CD4-positive, alpha-beta T cell (primary cell): ENCODE measurements at regions of chr14 and their contacts with region 1.

Region 1: DNA sequence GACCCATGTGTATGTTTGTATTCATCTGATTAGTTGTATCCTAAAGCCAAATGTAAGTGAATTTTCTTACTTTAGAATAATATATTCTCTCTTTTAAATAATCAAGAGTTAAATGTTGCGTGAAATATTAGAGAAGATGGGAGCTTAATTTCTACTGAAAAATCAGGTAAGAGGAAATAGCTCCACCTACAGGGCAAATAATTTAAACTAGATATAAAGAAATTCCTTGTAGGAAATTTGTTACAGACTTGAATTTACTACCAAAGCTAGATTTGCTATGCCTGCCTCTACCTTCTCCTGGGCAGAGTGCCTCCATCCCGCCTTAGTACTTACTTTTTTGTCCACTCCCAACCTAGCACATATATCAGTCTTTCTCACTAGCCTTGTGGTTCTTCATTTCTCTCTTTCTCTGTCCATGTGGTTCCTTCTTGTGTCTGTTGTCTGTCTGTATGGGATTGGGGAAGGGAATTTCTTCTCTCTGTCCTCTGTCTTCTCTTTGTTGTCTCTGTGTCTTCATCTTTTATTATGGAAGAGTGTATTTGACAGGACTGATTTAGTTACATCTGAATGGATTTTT is 44.7 kb downstream of the PALS1 start:
- DNase-seq: peak in 3 of 14 experiments; percentile 48 to 55 (median 51)
- ATAC-seq: no peak
- H3K4me3 ChIP-seq: no peak overlapping the region
- H3K4me3 Mint-ChIP-seq: no peak overlapping the region
- H3K27ac ChIP-seq: no peak overlapping the region
- H3K27ac Mint-ChIP-seq: no peak overlapping the region
- H3K4me1 ChIP-seq: no peaks in the 10 kb centered on the region
- H3K4me1 Mint-ChIP-seq: no peaks in the 10 kb centered on the region
- H3K27me3 ChIP-seq: no peaks in the 10 kb centered on the region
- H3K27me3 Mint-ChIP-seq: no peaks in the 10 kb centered on the region
- CTCF ChIP-seq: peak; percentile 81

Region 2: DNA sequence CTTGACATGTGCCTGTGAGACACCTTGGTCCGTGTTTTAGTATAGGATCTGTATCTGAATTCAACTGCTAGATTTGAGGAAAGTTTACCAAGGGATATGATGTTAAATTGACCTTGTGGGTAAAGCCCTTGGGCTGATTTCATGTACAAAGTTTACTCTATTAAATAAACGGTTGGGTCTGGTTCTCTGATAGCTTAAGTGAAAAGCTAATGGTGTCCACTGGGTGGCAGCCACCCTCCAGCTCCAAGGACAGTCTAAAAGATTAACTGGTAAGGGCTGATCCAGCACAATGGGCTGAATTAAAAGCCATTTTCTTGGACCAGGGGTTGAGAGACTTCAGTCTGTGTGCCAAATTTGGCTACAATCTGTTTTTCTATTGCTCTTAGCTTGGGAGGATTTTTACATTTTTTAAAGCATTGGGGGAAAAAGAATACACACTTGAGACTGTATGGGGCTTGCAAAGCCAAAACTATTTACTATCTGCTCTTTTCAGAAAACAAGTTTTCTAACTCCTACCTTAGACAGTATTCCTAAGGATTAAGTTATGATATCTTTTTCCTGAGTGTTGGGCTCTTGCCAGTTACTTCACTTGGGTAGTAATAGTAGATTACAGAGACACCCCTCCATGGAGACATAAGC is 661.5 kb before region 1 on chr14:
- CTCF ChIA-PET with region 1: no interaction called
- POLR2A ChIA-PET with region 1: no interaction called
- intact Hi-C with region 1: loop called (anchors 5 to 10 kb)
- DNase-seq: peak in 7 of 14 experiments; percentile 4 to 42 (median 26)
- ATAC-seq: no peak
- H3K4me3 ChIP-seq: no peak overlapping the region
- H3K4me3 Mint-ChIP-seq: no peak overlapping the region
- H3K27ac ChIP-seq: no peak overlapping the region
- H3K27ac Mint-ChIP-seq: no peak overlapping the region
- H3K4me1 ChIP-seq: no peaks in the 10 kb centered on the region
- H3K4me1 Mint-ChIP-seq: peaks cover 9% of the 10 kb centered on the region
- H3K27me3 ChIP-seq: no peaks in the 10 kb centered on the region
- H3K27me3 Mint-ChIP-seq: no peaks in the 10 kb centered on the region
- CTCF ChIP-seq: peak; percentile 41

Region 3: GRCh38 chr14:68552602-68553001 is 1266.6 kb after region 1 on chr14:
- CTCF ChIA-PET with region 1: no interaction called
- POLR2A ChIA-PET with region 1: no interaction called
- intact Hi-C with region 1: no loop called
- DNase-seq: peak in 1 of 14 experiments; percentile 5
- ATAC-seq: no peak
- H3K4me3 ChIP-seq: no peak overlapping the region
- H3K4me3 Mint-ChIP-seq: no peak overlapping the region
- H3K27ac ChIP-seq: no peak overlapping the region
- H3K27ac Mint-ChIP-seq: no peak overlapping the region
- H3K4me1 ChIP-seq: no peaks in the 10 kb centered on the region
- H3K4me1 Mint-ChIP-seq: peaks cover 31% of the 10 kb centered on the region
- H3K27me3 ChIP-seq: no peaks in the 10 kb centered on the region
- H3K27me3 Mint-ChIP-seq: no peaks in the 10 kb centered on the region
- CTCF ChIP-seq: no peak